Spleen (tissue), 13 donors: ENCODE measurements at regions of chr20 and their contacts with region 1.

Region 1: DNA sequence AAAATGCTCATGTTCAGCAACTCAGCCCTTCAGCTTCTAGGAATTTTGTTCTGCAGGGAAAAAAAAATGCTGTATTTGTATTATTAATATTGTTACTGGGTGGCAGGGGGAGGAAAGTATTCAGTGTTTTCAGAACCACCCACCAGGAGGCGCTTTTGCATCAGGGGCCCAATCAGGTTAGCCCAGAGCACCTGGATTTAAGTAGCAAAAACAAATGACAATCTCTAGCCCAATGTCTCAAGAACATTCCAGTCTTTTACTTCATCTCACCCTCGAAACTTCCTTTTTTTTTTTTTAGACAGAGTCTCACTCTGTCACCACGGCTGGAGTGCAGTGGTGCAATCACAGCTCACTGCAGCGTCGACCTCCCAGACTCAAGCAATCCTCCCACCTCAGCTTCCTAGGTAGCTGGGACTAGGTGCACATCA is 635 bp upstream of the C20orf203 start:
- DNase-seq: no peak
- H3K4me3 ChIP-seq: no peak overlapping the region
- H3K27ac ChIP-seq: no peak overlapping the region
- H3K4me1 ChIP-seq: peaks cover 5 to 42% (median 24%) of the 10 kb centered on the region in 6 donors
- H3K27me3 ChIP-seq: no peaks in the 10 kb centered on the region
- CTCF ChIP-seq: peak; percentile 19 to 76 (median 66)
- POLR2A ChIP-seq: no peak

Region 2: GRCh38 chr20:32779500-32780211 is 105.3 kb after region 1 on chr20:
- intact Hi-C with region 1: loop called (anchors 2 kb)
- DNase-seq: no peak
- H3K4me3 ChIP-seq: no peak overlapping the region
- H3K27ac ChIP-seq: no peak overlapping the region
- H3K4me1 ChIP-seq: no peaks in the 10 kb centered on the region
- H3K27me3 ChIP-seq: no peaks in the 10 kb centered on the region
- CTCF ChIP-seq: no peak
- POLR2A ChIP-seq: no peak

Region 3: GRCh38 chr20:32841174-32841573 is 166.8 kb after region 1 on chr20:
- intact Hi-C with region 1: no loop called
- DNase-seq: no peak
- H3K4me3 ChIP-seq: no peak overlapping the region
- H3K27ac ChIP-seq: no peak overlapping the region
- H3K4me1 ChIP-seq: peaks cover 0 to 20% (median 0%) of the 10 kb centered on the region in 6 donors
- H3K27me3 ChIP-seq: no peaks in the 10 kb centered on the region
- CTCF ChIP-seq: no peak
- POLR2A ChIP-seq: no peak